A549 (cell line): ENCODE measurements at regions of chr5 and their contacts with region 1.

Region 1: GRCh38 chr5:150560401-150561193 is 52.7 kb downstream of the NDST1 start:
- DNase-seq: peak; percentile 83 to 92
- ATAC-seq: peak; percentile 72 to 85
- H3K4me3 ChIP-seq: no peak overlapping the region
- H3K27ac ChIP-seq: peak overlapping the region; percentile 66 to 80
- H3K4me1 ChIP-seq: peaks cover 19% of the 10 kb centered on the region
- CTCF ChIP-seq: peak; percentile 93
- EP300 ChIP-seq: no peak
- POLR2A ChIP-seq: no peak
- RAD21 ChIP-seq: peak; percentile 94 to 95

Region 2: GRCh38 chr5:150449517-150450339 is 110.9 kb before region 1 on chr5 and contains the start of gene RPS14:
- CTCF ChIA-PET with region 1: interaction called, 23 read pairs
- POLR2A ChIA-PET with region 1: no interaction called
- DNase-seq: peak; percentile 96
- ATAC-seq: peak; percentile 95
- H3K4me3 ChIP-seq: peak within 1 kb of the TSS; percentile 78
- H3K27ac ChIP-seq: peak within 1 kb of the TSS; percentile 96
- H3K4me1 ChIP-seq: peaks cover 33% of the 10 kb centered on the region
- CTCF ChIP-seq: peak; percentile 88
- EP300 ChIP-seq: no peak
- POLR2A ChIP-seq: peak; percentile 81
- RAD21 ChIP-seq: no peak
- polyA plus RNA-seq, gene RPS14: 3,799 and 4,312 TPM in 2 replicates

Region 3: GRCh38 chr5:150573867-150574817 is 13.5 kb after region 1 on chr5:
- CTCF ChIA-PET with region 1: interaction called, 19 read pairs
- POLR2A ChIA-PET with region 1: no interaction called
- DNase-seq: peak in 1 of 2 experiments; percentile 31
- ATAC-seq: peak; percentile 63 to 84; a peak in 5 of 6 replicates
- H3K4me3 ChIP-seq: no peak overlapping the region
- H3K27ac ChIP-seq: no peak overlapping the region
- H3K4me1 ChIP-seq: no peaks in the 10 kb centered on the region
- CTCF ChIP-seq: peak; percentile 17; the same call in 1 of the 3 replicates
- EP300 ChIP-seq: no peak
- POLR2A ChIP-seq: no peak
- RAD21 ChIP-seq: no peak

Region 4: DNA sequence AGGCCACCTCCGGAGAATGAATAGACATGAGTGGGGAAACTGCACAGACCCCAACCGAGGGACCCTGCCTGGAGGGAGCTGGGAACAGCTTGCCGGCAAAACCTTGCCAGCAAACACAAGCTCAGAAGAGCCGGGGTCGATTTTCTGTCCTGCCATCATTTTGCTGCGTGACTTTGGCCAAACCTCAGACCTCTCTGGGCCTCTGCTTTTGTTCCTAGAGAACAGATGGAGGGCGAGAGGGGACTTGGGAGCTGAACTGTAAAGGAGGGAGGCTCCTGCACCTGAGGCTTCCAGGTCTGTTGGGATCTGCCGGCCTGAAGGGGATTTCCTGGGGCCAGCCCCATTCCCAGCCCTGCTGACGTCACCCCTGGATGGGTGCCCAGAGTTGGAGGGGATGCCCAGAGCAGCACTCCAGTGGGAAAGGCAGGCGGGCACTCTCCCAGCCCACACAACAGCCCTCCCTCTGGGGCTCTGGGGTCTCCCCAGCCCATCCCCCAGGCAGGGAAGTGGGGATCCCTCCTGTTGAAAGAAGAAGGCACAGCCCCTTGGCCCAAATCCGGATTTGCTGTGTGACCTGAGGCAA is 39.4 kb after region 1 on chr5:
- CTCF ChIA-PET with region 1: no interaction called
- POLR2A ChIA-PET with region 1: no interaction called
- DNase-seq: peak; percentile 61 to 91
- ATAC-seq: peak; percentile 59 to 87; a peak in 5 of 6 replicates
- H3K4me3 ChIP-seq: no peak overlapping the region
- H3K27ac ChIP-seq: peak overlapping the region in 1 of 2 experiments; percentile 69; a peak in 3 of 6 replicates
- H3K4me1 ChIP-seq: peaks cover 14% of the 10 kb centered on the region
- CTCF ChIP-seq: no peak
- EP300 ChIP-seq: no peak
- POLR2A ChIP-seq: no peak
- RAD21 ChIP-seq: no peak

Region 5: DNA sequence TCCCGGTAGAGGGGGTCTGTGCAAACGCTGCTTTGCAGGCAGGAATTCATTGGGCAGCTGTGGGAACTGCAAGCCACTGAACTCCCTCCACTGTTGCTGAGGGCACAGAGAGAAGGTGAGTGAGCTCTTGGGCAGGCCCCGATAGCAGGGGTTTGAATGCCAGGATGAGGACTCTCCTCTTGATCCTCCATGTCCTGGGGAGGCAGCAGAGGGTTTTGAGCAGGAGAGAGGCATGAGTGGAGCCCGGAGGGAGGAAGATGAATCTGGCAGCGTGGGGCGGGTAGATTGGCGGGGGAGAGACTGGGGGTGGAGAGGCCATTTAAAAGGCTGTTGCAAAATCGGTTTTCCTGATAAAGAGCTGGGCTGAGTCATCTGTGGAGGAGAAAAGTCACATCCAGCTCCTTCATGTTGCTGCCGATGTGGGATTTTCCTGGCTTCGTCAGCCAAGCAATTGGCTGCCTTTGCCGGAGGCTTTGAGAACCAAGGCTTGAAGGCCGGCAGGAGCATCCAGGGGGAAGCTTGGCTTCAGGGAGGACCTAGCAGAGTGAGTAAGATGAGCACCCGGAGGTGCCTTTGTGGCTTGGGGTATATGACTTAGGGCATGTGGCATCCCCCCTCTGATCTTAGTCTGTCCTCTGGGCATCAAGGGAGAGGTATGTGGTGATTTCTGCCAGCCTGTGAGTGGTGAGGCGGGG is 79.9 kb after region 1 on chr5 and contains the start of gene SYNPO:
- CTCF ChIA-PET with region 1: interaction called, 92 read pairs
- POLR2A ChIA-PET with region 1: no interaction called
- DNase-seq: peak; percentile 80 to 84
- ATAC-seq: peak; percentile 36 to 42
- H3K4me3 ChIP-seq: peak within 1 kb of the TSS; percentile 54
- H3K27ac ChIP-seq: peak within 1 kb of the TSS; percentile 95 to 96
- H3K4me1 ChIP-seq: peaks cover 88% of the 10 kb centered on the region
- CTCF ChIP-seq: no peak
- EP300 ChIP-seq: peak; percentile 39 to 40; a peak in 2 of 5 replicates
- POLR2A ChIP-seq: no peak; the same call in 1 of the 2 replicates
- RAD21 ChIP-seq: no peak; a peak in 1 of 5 replicates
- polyA plus RNA-seq, gene SYNPO: 13.7 and 20.7 TPM in 2 replicates

Region 6: GRCh38 chr5:150672237-150672883 is 111.8 kb after region 1 on chr5:
- CTCF ChIA-PET with region 1: interaction called, 30 read pairs
- POLR2A ChIA-PET with region 1: no interaction called
- DNase-seq: no peak
- ATAC-seq: peak; percentile 61 to 73
- H3K4me3 ChIP-seq: peak overlapping the region; percentile 43
- H3K27ac ChIP-seq: peak overlapping the region; percentile 17 to 80; a peak in 4 of 6 replicates
- H3K4me1 ChIP-seq: 0 out of 3 replicates have a peak, but pooled peaks cover 5% of the 10 kb centered on the region
- CTCF ChIP-seq: no peak
- EP300 ChIP-seq: no peak
- POLR2A ChIP-seq: no peak
- RAD21 ChIP-seq: no peak

Region 7: DNA sequence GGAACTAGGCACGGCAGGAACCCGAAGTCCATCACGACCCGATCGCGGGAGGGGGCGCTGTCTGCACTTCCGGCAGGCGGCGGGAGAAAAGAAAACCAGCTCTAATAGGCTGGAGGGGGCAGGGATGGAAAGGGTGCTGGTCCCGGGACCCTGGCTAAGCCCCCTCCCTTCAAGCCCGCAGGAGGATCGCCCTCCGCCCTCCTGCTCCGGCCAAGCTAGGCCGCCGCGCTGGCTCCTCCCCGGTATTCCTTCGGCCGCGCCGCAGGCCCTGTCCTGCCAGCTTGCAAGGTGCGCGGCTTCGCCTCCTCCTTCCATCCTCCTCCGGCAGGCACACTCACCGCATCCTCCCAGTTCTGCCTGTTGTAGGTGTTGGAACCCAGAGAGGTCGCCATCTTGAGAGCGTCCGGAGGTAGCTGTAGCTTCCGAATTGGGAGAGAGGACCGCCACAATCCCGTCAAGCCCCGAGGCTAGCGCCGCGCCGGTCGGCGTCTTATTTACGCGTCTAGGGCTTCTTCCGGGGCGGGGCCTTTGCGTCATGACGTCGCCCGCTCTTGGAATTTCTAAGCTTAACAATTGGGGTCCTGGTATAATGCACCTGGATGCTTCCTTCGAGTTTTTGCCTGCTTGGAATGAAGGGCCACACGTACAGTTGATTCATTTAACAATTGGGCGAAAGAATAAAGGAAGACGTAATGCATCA is 140.1 kb after region 1 on chr5 and contains the start of gene RBM22:
- CTCF ChIA-PET with region 1: interaction called, 28 read pairs
- POLR2A ChIA-PET with region 1: no interaction called
- DNase-seq: peak; percentile 74 to 90
- ATAC-seq: peak; percentile 96 to 98
- H3K4me3 ChIP-seq: peak within 1 kb of the TSS; percentile 97
- H3K27ac ChIP-seq: peak within 1 kb of the TSS; percentile 98 to 99
- H3K4me1 ChIP-seq: peaks cover 14% of the 10 kb centered on the region
- CTCF ChIP-seq: peak; percentile 60
- EP300 ChIP-seq: no peak
- POLR2A ChIP-seq: peak; percentile 80
- RAD21 ChIP-seq: peak in 1 of 2 experiments; percentile 6; a peak in 1 of 5 replicates
- polyA plus RNA-seq, gene RBM22: 65.3 and 75.7 TPM in 2 replicates